CD8-positive, alpha-beta T cell (primary cell): ENCODE measurements at regions of chr6 and their contacts with region 1.

Region 1: DNA sequence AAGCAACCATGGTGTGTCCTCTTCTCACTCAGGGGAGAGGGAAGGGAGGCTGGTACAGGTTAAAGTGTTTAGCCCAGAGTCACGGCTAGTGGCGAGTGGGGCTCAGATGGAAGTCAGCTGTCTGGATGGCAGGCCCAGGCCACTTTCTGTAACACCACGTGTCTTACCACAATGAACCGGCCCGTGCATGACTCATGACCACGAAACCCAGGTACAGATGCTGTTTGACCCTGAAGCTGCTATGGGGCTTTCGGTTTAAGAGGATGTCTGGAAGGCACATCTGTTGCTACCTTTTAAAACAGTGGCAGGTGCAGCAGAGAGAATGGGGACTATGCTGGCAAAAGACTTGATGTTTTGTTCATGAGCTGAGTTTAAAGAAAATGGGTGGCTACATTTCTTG is 36.5 kb upstream of the MPC1 start:
- DNase-seq: peak in 8 of 9 experiments; percentile 50 to 82 (median 72)
- ATAC-seq: peak; percentile 35
- H3K4me3 ChIP-seq: no peak overlapping the region
- H3K4me3 Mint-ChIP-seq: peak overlapping the region; percentile 50
- H3K27ac ChIP-seq: peak overlapping the region; percentile 15 to 58
- H3K27ac Mint-ChIP-seq: peak overlapping the region; percentile 92
- H3K4me1 ChIP-seq: peaks cover 62% of the 10 kb centered on the region
- H3K4me1 Mint-ChIP-seq: peaks cover 75% of the 10 kb centered on the region
- H3K27me3 ChIP-seq: no peaks in the 10 kb centered on the region
- H3K27me3 Mint-ChIP-seq: no peaks in the 10 kb centered on the region
- CTCF ChIP-seq: no peak

Region 2: DNA sequence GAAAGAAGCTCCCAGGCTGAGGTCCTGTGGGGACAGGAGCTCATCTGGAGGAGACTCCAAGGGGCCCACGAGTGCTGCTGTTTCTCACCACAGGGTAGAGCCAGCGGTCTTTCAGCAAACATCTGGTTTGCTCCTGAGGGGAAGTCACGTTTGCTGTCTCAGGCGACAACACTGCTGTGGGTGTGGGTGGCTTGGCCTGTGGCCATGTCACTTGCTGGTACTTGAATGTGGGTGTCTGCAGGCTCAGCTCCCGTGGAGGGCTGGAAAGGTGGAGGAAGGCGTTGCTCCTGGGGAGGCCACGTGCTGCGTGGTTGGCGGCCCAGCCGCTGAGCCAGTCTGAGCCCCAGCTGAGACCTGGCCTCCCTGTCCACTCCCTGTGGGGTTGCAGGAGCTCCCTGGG is 16.3 kb after region 1 on chr6:
- CTCF ChIA-PET with region 1: interaction called, 13 read pairs
- POLR2A ChIA-PET with region 1: interaction called, 9 read pairs
- intact Hi-C with region 1: no loop called
- DNase-seq: peak; percentile 26 to 84 (median 60)
- ATAC-seq: peak; percentile 88
- H3K4me3 ChIP-seq: no peak overlapping the region
- H3K4me3 Mint-ChIP-seq: peak overlapping the region; percentile 29
- H3K27ac ChIP-seq: no peak overlapping the region
- H3K27ac Mint-ChIP-seq: peak overlapping the region; percentile 88
- H3K4me1 ChIP-seq: peaks cover 22% of the 10 kb centered on the region
- H3K4me1 Mint-ChIP-seq: peaks cover 29% of the 10 kb centered on the region
- H3K27me3 ChIP-seq: no peaks in the 10 kb centered on the region
- H3K27me3 Mint-ChIP-seq: no peaks in the 10 kb centered on the region
- CTCF ChIP-seq: peak; percentile 35

Region 3: DNA sequence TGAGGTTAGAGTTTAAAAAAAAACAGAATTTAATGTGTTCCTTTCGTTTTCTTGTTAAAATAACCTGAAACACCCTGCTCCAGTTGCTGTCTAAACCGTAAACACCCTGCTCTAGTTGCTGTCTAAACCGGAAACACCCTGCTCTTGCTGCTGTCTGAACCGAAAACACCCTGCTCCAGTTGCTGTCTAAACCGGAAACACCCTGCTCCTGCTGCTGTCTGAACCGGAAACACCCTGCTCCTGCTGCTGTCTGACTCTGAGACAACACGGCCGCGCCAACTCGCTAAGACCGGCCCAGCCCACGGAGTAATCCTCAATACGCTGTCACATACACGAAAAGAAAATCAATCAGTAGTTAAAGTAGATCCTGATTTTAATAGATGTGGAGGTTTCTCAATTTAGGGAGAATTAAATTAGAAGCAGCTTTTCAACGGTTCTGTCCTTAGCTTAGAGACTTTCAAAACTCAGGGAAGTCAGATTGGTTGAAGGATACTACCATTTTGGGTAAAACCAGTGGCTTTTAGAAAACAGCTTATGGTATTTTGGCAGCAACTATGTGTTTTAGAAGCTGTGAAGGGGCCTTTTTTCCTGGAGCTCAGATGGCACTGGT is 68.9 kb after region 1 on chr6:
- CTCF ChIA-PET with region 1: no interaction called
- POLR2A ChIA-PET with region 1: interaction called, 5 read pairs
- intact Hi-C with region 1: loop called (anchors 1 to 2 kb)
- DNase-seq: peak; percentile 61 to 95 (median 80)
- ATAC-seq: peak; percentile 95
- H3K4me3 ChIP-seq: peak overlapping the region; percentile 9 to 11
- H3K4me3 Mint-ChIP-seq: peak overlapping the region; percentile 77
- H3K27ac ChIP-seq: peak overlapping the region; percentile 64 to 84
- H3K27ac Mint-ChIP-seq: peak overlapping the region; percentile 99
- H3K4me1 ChIP-seq: peaks cover 19% of the 10 kb centered on the region
- H3K4me1 Mint-ChIP-seq: peaks cover 25% of the 10 kb centered on the region
- H3K27me3 ChIP-seq: no peaks in the 10 kb centered on the region
- H3K27me3 Mint-ChIP-seq: no peaks in the 10 kb centered on the region
- CTCF ChIP-seq: no peak

Region 4: GRCh38 chr6:166956444-166957086 is 537.3 kb after region 1 on chr6 and contains the start of gene RNASET2:
- CTCF ChIA-PET with region 1: no interaction called
- POLR2A ChIA-PET with region 1: no interaction called
- intact Hi-C with region 1: loop called (anchors 5 to 10 kb)
- DNase-seq: peak; percentile 96 to 100 (median 99)
- ATAC-seq: peak; percentile 87
- H3K4me3 ChIP-seq: peak within 1 kb of the TSS; percentile 74 to 75
- H3K4me3 Mint-ChIP-seq: peak within 1 kb of the TSS; percentile 93
- H3K27ac ChIP-seq: peak within 1 kb of the TSS; percentile 81 to 86
- H3K27ac Mint-ChIP-seq: peak within 1 kb of the TSS; percentile 98
- H3K4me1 ChIP-seq: peaks cover 68% of the 10 kb centered on the region
- H3K4me1 Mint-ChIP-seq: peaks cover 70% of the 10 kb centered on the region
- H3K27me3 ChIP-seq: no peaks in the 10 kb centered on the region
- H3K27me3 Mint-ChIP-seq: no peaks in the 10 kb centered on the region
- CTCF ChIP-seq: no peak
- total RNA-seq, gene RNASET2: 93.1 to 98.9 TPM